Activated CD8-positive, alpha-beta T cell treated with anti-CD3 and anti-CD28 coated beads for 36 hours (primary cell): ENCODE measurements at regions of chr12 and their contacts with region 1.

Region 1: GRCh38 chr12:122107261-122107660 is 28.7 kb downstream of the MLXIP start:
- DNase-seq: no peak
- ATAC-seq: no peak
- H3K4me3 Mint-ChIP-seq: no peak overlapping the region
- H3K27ac Mint-ChIP-seq: peak overlapping the region; percentile 88
- H3K4me1 Mint-ChIP-seq: peaks cover 73% of the 10 kb centered on the region
- H3K27me3 Mint-ChIP-seq: no peaks in the 10 kb centered on the region
- CTCF ChIP-seq: no peak

Region 2: GRCh38 chr12:122048151-122048550 is 59.1 kb before region 1 on chr12:
- CTCF ChIA-PET with region 1: no interaction called
- POLR2A ChIA-PET with region 1: no interaction called
- intact Hi-C with region 1: no loop called
- DNase-seq: no peak
- ATAC-seq: no peak
- H3K4me3 Mint-ChIP-seq: no peak overlapping the region
- H3K27ac Mint-ChIP-seq: no peak overlapping the region
- H3K4me1 Mint-ChIP-seq: no peaks in the 10 kb centered on the region
- H3K27me3 Mint-ChIP-seq: no peaks in the 10 kb centered on the region
- CTCF ChIP-seq: no peak

Region 3: GRCh38 chr12:122090759-122091515 is 16.3 kb before region 1 on chr12:
- CTCF ChIA-PET with region 1: interaction called, 53 read pairs
- POLR2A ChIA-PET with region 1: interaction called, 16 read pairs
- intact Hi-C with region 1: no loop called
- DNase-seq: no peak
- ATAC-seq: no peak
- H3K4me3 Mint-ChIP-seq: no peak overlapping the region
- H3K27ac Mint-ChIP-seq: no peak overlapping the region
- H3K4me1 Mint-ChIP-seq: peaks cover 30% of the 10 kb centered on the region
- H3K27me3 Mint-ChIP-seq: no peaks in the 10 kb centered on the region
- CTCF ChIP-seq: no peak

Region 4: GRCh38 chr12:122265931-122266771 is 158.9 kb after region 1 on chr12 and contains the start of gene VPS33A:
- CTCF ChIA-PET with region 1: no interaction called
- POLR2A ChIA-PET with region 1: no interaction called
- intact Hi-C with region 1: no loop called
- DNase-seq: peak; percentile 97
- ATAC-seq: peak; percentile 83
- H3K4me3 Mint-ChIP-seq: peak within 1 kb of the TSS; percentile 97
- H3K27ac Mint-ChIP-seq: peak within 1 kb of the TSS; percentile 99
- H3K4me1 Mint-ChIP-seq: peaks cover 15% of the 10 kb centered on the region
- H3K27me3 Mint-ChIP-seq: peaks cover 2% of the 10 kb centered on the region
- CTCF ChIP-seq: no peak
- total RNA-seq, gene VPS33A: 19.7 to 21.4 TPM